Vagina (tissue), 2 donors: ENCODE measurements at regions of chr2 and their contacts with region 1.

Region 1: DNA sequence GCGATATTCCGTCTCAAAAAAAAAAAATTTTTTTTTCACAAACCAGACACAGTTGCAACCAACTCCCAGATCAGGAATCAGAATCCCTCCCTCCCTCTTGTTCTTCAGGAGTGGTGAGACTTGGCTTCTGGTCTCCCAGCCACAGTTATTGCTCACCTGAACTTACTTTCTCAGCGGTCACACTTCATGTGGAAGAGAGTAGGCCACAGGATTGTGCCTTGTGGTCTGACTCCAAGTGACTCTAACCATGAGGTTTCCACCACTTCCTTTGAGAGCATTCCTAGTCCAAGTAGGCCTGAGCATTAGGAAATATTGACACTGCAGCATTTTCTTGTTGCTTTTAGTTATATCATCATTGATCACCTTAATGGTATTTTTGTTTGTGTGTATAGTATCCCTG is 12.1 kb downstream of the FMNL2 start:
- DNase-seq: no peak
- H3K4me3 ChIP-seq: no peak overlapping the region
- H3K27ac ChIP-seq: no peak overlapping the region
- H3K4me1 ChIP-seq: peaks cover 6% of the 10 kb centered on the region
- H3K27me3 ChIP-seq: no peaks in the 10 kb centered on the region
- CTCF ChIP-seq: no peak
- POLR2A ChIP-seq: no peak

Region 2: DNA sequence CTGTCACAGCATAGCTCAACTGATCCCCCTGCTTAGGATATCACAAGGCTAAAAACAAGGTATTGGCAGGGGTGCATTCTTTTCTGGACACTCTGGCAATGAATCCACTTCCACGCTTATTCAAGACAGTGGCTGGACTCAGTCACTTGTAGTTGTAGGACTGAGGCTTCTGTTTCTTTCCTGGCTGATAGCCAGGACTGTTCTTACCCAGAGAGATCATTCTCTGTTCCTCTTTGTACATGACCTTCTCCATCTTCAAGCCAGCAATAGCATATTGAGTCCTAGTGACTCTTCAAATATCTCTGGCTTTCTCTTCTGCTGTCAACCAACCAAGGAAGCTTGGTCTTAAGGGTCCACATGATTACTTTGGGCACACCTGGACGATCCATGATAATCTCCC is 1326.7 kb before region 1 on chr2:
- intact Hi-C with region 1: no loop called
- DNase-seq: no peak
- H3K4me3 ChIP-seq: no peak overlapping the region
- H3K27ac ChIP-seq: no peak overlapping the region
- H3K4me1 ChIP-seq: no peaks in the 10 kb centered on the region
- H3K27me3 ChIP-seq: no peaks in the 10 kb centered on the region
- CTCF ChIP-seq: no peak
- POLR2A ChIP-seq: no peak

Region 3: DNA sequence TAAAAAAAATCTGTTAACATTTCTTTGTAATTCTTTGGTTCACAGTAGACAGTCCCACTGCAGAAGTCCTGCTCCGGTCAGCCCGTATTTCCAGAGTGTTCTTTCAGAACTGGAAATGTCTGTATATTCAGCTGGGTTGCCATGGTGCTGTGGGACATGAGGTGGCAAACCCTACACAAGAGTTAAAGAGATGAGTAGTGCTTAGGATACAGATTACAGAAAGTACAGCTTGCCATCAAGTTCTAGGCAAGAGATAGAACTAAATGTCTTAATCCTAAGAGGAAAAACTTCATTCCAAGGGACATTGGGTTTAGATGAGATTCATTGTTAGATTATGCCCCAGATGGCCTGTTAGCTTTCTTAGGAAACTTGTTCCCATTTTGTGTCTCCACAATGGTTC is 48.0 kb after region 1 on chr2:
- intact Hi-C with region 1: loop called (anchors 10 kb)
- DNase-seq: no peak
- H3K4me3 ChIP-seq: no peak overlapping the region
- H3K27ac ChIP-seq: peak overlapping the region; percentile 16
- H3K4me1 ChIP-seq: peaks cover 30% of the 10 kb centered on the region
- H3K27me3 ChIP-seq: no peaks in the 10 kb centered on the region
- CTCF ChIP-seq: no peak
- POLR2A ChIP-seq: no peak

Region 4: GRCh38 chr2:152826581-152827279 is 479.7 kb after region 1 on chr2:
- intact Hi-C with region 1: no loop called
- DNase-seq: no peak
- H3K4me3 ChIP-seq: no peak overlapping the region
- H3K27ac ChIP-seq: no peak overlapping the region
- H3K4me1 ChIP-seq: no peaks in the 10 kb centered on the region
- H3K27me3 ChIP-seq: no peaks in the 10 kb centered on the region
- CTCF ChIP-seq: no peak
- POLR2A ChIP-seq: no peak